AG04450 (cell line): ENCODE measurements at regions of chr5 and their contacts with region 1.

Region 1: GRCh38 chr5:108260117-108260857 is 121.6 kb downstream of the FBXL17 start:
- DNase-seq: peak; percentile 60
- H3K4me3 ChIP-seq: no peak overlapping the region
- H3K27ac ChIP-seq: no peak overlapping the region
- H3K27me3 ChIP-seq: no peaks in the 10 kb centered on the region
- CTCF ChIP-seq: peak; percentile 99

Region 2: DNA sequence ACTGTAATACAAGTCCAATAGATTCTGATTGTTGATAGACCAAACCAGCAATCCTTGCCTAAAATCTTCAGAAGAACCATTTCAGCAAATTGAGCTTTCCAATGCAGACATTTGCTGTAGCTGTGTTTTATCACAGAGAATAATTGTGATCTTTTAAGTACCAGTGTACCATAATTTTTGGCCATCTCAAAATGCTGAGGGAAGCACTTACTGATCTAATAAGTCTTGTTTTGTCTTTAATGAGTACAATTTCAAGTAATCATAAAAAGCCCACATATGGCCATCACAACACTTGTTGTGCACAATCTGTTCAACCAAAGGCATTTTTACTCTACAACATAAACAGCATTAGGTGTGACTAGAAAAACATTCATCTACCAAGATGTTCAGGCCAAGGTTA is 38.3 kb before region 1 on chr5:
- CTCF ChIA-PET with region 1: interaction called, 12 read pairs
- POLR2A ChIA-PET with region 1: no interaction called
- DNase-seq: no peak
- H3K4me3 ChIP-seq: no peak overlapping the region
- H3K27ac ChIP-seq: no peak overlapping the region
- H3K27me3 ChIP-seq: no peaks in the 10 kb centered on the region
- CTCF ChIP-seq: no peak

Region 3: GRCh38 chr5:108278285-108279240 is 18.3 kb after region 1 on chr5:
- CTCF ChIA-PET with region 1: interaction called, 114 read pairs
- POLR2A ChIA-PET with region 1: no interaction called
- DNase-seq: no peak
- H3K4me3 ChIP-seq: no peak overlapping the region
- H3K27ac ChIP-seq: no peak overlapping the region
- H3K27me3 ChIP-seq: no peaks in the 10 kb centered on the region
- CTCF ChIP-seq: no peak

Region 4: DNA sequence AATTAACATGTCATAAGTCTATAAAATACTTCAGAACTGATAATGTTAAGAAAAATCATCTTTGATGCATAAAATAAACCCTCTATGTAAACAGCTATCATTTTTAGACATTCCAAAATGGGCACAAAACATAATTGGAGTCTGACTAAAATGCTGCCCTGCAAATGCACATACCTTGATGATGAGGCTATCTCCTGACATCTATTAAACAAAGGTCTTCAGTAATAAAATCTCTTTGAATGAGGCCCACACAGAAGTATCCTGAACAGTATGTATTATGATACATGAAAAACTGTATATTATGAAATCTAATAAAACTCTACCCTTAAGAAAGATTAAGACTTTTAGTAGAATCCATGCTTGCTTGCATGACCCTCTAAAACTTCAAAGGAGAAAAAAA is 55.5 kb after region 1 on chr5:
- CTCF ChIA-PET with region 1: interaction called, 19 read pairs
- POLR2A ChIA-PET with region 1: no interaction called
- DNase-seq: no peak
- H3K4me3 ChIP-seq: no peak overlapping the region
- H3K27ac ChIP-seq: no peak overlapping the region
- H3K27me3 ChIP-seq: no peaks in the 10 kb centered on the region
- CTCF ChIP-seq: no peak

Region 5: GRCh38 chr5:108345541-108346171 is 85.4 kb after region 1 on chr5:
- CTCF ChIA-PET with region 1: interaction called, 186 read pairs
- POLR2A ChIA-PET with region 1: no interaction called
- DNase-seq: peak; percentile 13
- H3K4me3 ChIP-seq: no peak overlapping the region
- H3K27ac ChIP-seq: no peak overlapping the region
- H3K27me3 ChIP-seq: no peaks in the 10 kb centered on the region
- CTCF ChIP-seq: peak; percentile 42

Region 6: GRCh38 chr5:108367679-108368334 is 107.5 kb after region 1 on chr5:
- CTCF ChIA-PET with region 1: interaction called, 17 read pairs
- POLR2A ChIA-PET with region 1: no interaction called
- DNase-seq: no peak
- H3K4me3 ChIP-seq: no peak overlapping the region
- H3K27ac ChIP-seq: no peak overlapping the region
- H3K27me3 ChIP-seq: no peaks in the 10 kb centered on the region
- CTCF ChIP-seq: no peak